Dendritic cell treated with granulocyte-macrophage colony-stimulating factor and Interleukin-4, amounts not matched to agents 40 ng/mL and 50 ng/mL, for 4 days (primary cell): ENCODE measurements at regions of chr1 and their contacts with region 1.

Region 1: GRCh38 chr1:169893494-169894362 is at the start of gene SCYL3:
- H3K4me3 Mint-ChIP-seq: peak within 1 kb of the TSS; percentile 87
- H3K27ac Mint-ChIP-seq: peak within 1 kb of the TSS; percentile 100
- H3K4me1 Mint-ChIP-seq: peaks cover 44% of the 10 kb centered on the region
- H3K27me3 Mint-ChIP-seq: peaks cover 11% of the 10 kb centered on the region

Region 2: DNA sequence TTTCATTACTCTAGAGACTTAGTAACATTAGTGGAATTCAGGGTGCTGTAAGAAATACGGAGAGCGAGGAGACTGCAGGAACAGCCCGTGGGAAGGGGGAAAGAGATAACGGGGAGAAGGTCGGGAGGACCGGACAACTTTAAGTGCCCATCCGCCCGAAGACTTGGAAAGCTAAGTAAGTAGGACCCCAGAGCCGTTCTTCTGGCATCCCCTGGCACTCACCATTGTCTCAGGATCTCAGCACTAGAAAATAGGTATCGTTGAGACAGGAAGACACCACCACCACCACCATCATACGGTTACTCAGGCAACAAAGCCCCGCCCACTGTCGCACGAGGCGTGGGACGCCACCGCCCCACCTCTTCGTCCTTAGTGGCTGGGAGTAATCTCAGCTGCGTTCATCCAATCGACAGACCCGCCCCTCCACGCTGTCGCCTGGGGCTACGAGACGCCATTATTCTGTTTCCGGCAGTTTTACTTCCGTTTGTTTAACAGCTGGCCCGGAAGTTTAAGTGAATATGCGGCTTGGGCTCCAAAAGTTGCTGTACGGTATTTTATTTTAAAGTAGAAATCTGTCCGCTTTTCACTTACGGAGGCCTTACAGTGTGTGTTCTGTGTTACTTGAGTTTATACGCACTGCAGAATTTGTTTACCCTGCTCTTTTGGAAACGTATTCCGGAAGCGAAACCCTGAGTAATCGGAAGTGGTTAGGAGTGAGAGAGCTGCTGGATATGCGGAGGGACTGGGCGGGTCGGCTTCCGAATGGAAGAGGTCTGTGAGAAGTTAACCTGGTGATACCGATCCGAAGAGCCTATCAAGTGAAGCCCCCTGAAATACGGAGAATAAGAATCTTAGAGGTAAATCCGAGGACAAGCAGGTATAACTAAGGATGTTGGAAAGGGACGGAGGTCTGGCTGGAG is 526.0 kb before region 1 on chr1 and contains the starts of genes BLZF1 and NME7:
- intact Hi-C with region 1: loop called (anchors 5 kb)
- H3K4me3 Mint-ChIP-seq: no peak within 1 kb of the TSS
- H3K27ac Mint-ChIP-seq: no peak within 1 kb of the TSS
- H3K4me1 Mint-ChIP-seq: peaks cover 12% of the 10 kb centered on the region
- H3K27me3 Mint-ChIP-seq: no peaks in the 10 kb centered on the region

Region 3: GRCh38 chr1:169794530-169795416 is 99.0 kb before region 1 on chr1 and contains the start of gene METTL18:
- intact Hi-C with region 1: loop called (anchors 1 kb)
- H3K4me3 Mint-ChIP-seq: peak within 1 kb of the TSS; percentile 92
- H3K27ac Mint-ChIP-seq: peak within 1 kb of the TSS; percentile 99
- H3K4me1 Mint-ChIP-seq: peaks cover 14% of the 10 kb centered on the region
- H3K27me3 Mint-ChIP-seq: peaks cover 2% of the 10 kb centered on the region

Region 4: GRCh38 chr1:169833179-169833901 is 60.4 kb before region 1 on chr1:
- intact Hi-C with region 1: no loop called
- H3K4me3 Mint-ChIP-seq: no peak overlapping the region
- H3K27ac Mint-ChIP-seq: no peak overlapping the region
- H3K4me1 Mint-ChIP-seq: no peaks in the 10 kb centered on the region
- H3K27me3 Mint-ChIP-seq: no peaks in the 10 kb centered on the region

Region 5: DNA sequence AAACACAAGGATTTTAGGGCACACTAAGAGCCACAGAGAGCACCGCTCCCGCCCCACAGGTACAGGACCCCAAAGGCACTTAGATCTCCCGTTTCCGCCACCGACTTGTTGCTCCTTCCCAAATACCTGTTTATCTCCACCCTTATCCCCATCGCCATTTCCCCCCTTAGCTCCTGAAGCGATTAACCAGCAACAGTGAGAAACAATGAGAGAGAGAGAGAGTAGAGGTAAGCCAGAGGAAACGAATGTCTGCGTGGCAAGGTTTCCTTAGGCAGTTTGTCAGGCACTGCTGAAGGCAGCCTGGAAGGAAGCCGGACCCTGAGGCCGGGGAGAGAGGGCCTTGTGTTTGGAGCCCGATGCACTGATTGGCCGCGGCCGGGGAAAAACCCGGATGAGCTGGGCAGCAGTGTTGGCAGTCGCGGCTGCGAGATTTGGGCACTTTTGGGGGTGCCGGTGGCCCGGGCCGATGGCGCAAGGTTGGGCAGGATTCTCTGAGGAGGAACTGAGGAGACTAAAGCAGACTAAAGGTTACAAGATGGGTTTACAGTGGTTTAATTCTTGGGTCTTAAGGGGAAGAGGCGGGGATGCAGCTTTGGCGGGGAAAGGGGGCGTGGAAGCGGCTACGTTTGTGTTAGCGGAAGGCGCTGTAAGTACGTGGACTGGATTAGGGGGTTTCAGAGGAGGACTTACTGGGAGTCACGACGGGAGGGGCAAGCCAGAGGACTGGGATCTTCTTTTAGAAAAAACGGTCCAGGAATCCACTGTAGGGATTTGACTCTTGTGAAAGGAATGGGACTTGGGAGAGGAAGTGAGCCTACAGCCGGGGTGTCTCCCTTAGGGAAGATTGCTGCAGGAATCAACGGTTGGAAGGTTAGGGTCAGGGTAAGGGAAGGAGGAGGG is 638.3 kb after region 1 on chr1 and contains the start of gene GORAB:
- intact Hi-C with region 1: loop called (anchors 5 kb)
- H3K4me3 Mint-ChIP-seq: no peak within 1 kb of the TSS
- H3K27ac Mint-ChIP-seq: no peak within 1 kb of the TSS
- H3K4me1 Mint-ChIP-seq: peaks cover 10% of the 10 kb centered on the region
- H3K27me3 Mint-ChIP-seq: peaks cover 9% of the 10 kb centered on the region

Region 6: GRCh38 chr1:171313835-171314320 is 1420.2 kb after region 1 on chr1 and contains the start of gene FMO4:
- intact Hi-C with region 1: loop called (anchors 10 kb)
- H3K4me3 Mint-ChIP-seq: peak within 1 kb of the TSS; percentile 67
- H3K27ac Mint-ChIP-seq: peak within 1 kb of the TSS; percentile 82
- H3K4me1 Mint-ChIP-seq: peaks cover 9% of the 10 kb centered on the region
- H3K27me3 Mint-ChIP-seq: no peaks in the 10 kb centered on the region